GM12878 (cell line): ENCODE measurements at regions of chr16 and their contacts with region 1.

Region 1: DNA sequence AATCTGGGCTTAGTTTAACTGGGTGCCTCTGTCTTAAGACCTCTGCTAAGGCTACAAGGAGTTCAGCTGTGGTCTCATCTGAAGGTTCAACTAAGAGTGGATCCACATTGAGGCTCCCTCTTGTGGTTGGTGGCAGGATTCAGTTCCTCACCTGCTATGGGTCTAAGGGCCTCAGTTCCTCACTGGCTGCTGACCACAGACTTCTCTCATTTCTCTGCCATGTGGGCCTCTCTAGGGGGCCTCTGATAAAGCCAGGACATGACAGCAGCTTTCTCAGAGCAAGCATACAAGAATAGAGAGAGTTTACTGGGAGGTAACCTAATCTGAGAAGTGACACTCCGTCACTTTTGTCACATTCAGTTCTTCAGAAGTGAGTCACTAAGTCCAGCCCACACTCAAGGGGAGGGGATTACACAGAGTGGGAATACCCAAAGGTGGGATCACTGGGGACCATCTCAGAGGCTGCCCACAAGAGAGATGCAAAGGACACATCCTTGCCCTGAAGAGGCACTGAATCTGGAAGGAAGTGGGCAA is 19.2 kb upstream of the ABAT start:
- DNase-seq: peak; percentile 31
- ATAC-seq: peak; percentile 92
- H3K4me3 ChIP-seq: no peak overlapping the region
- H3K27ac ChIP-seq: no peak overlapping the region
- H3K4me1 ChIP-seq: peaks cover 12% of the 10 kb centered on the region; the same call in 1 of the 2 replicates
- H3K27me3 ChIP-seq: no peaks in the 10 kb centered on the region
- CTCF ChIP-seq: peak; percentile 27 to 39 (median 29); a peak in 5 of 6 replicates
- EP300 ChIP-seq: peak in 1 of 2 experiments; percentile 13; a peak in 1 of 4 replicates
- POLR2A ChIP-seq: no peak
- RAD21 ChIP-seq: peak; percentile 13; the same call in 1 of the 2 replicates

Region 2: GRCh38 chr16:8493972-8494371 is 161.3 kb before region 1 on chr16:
- CTCF ChIA-PET with region 1: no interaction called
- POLR2A ChIA-PET with region 1: no interaction called
- RAD21 ChIA-PET with region 1: no interaction called
- SMC1A ChIA-PET with region 1: no interaction called
- in situ Hi-C with region 1: no loop called
- intact Hi-C with region 1: no loop called
- DNase-seq: no peak
- ATAC-seq: no peak
- H3K4me3 ChIP-seq: no peak overlapping the region
- H3K27ac ChIP-seq: no peak overlapping the region
- H3K4me1 ChIP-seq: no peaks in the 10 kb centered on the region
- H3K27me3 ChIP-seq: no peaks in the 10 kb centered on the region
- CTCF ChIP-seq: no peak
- EP300 ChIP-seq: no peak
- POLR2A ChIP-seq: no peak
- RAD21 ChIP-seq: no peak

Region 3: DNA sequence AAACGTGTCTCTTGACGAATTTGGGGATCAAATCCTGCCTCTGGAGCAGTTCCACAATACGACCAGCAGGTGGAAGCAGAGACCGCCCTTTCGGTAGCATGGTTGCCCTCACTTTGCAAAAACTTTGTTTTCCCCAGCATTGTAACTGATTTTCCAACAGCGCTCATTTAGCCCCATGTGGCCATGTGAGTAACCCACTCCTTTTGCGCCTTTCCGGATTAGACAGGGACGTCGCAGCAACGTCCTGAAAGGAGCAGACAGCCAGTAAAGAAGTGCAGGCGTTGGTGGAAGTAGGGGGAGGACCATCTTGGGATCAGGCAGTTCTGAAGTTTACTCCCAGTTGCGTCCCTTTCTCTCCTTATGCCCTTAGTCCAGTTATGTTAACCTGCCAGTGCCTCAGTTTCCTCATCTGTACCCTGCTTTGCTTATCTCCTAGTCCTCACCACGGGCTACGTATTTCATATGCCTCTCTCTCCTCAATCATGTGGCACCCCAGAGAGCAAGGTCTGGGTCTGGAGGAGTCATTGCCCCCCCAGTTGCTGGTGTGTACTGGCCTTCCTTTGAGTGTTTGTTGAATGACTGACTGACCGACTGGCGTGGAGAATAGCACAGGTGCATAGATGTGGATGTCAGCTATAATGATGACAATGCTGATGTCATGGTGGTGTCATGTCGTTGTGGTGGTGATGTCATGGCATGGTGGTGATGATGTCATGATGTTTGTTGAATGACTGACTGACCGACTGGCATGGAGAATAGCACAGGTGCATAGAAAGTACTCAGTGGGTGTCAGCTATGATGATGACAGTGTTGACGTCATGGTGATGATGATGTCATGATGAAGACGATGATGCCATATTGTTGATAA is 87.3 kb before region 1 on chr16:
- CTCF ChIA-PET with region 1: interaction called, 4 read pairs
- POLR2A ChIA-PET with region 1: no interaction called
- RAD21 ChIA-PET with region 1: interaction called, 3 read pairs
- SMC1A ChIA-PET with region 1: interaction called, 5 read pairs
- in situ Hi-C with region 1: no loop called
- intact Hi-C with region 1: loop called (anchors 1 kb)
- DNase-seq: peak; percentile 66
- ATAC-seq: peak; percentile 96
- H3K4me3 ChIP-seq: no peak overlapping the region
- H3K27ac ChIP-seq: no peak overlapping the region
- H3K4me1 ChIP-seq: no peaks in the 10 kb centered on the region
- H3K27me3 ChIP-seq: no peaks in the 10 kb centered on the region; a peak in 1 of 4 replicates
- CTCF ChIP-seq: peak; percentile 88 to 99 (median 95)
- EP300 ChIP-seq: no peak
- POLR2A ChIP-seq: no peak
- RAD21 ChIP-seq: peak; percentile 96